Right ventricle myocardium inferior (tissue), 1 donor: ENCODE measurements at regions of chr14 and their contacts with region 1.

Region 1: GRCh38 chr14:66359500-66359899 is 126.7 kb upstream of the CCDC196 start:
- DNase-seq: no peak
- ATAC-seq: no peak

Region 2: GRCh38 chr14:66293533-66294105 is 65.9 kb before region 1 on chr14:
- intact Hi-C with region 1: no loop called
- DNase-seq: no peak
- ATAC-seq: no peak

Region 3: GRCh38 chr14:66315548-66315947 is 44.0 kb before region 1 on chr14:
- intact Hi-C with region 1: no loop called
- DNase-seq: no peak
- ATAC-seq: no peak

Region 4: GRCh38 chr14:67111022-67111421 is 751.5 kb after region 1 on chr14:
- intact Hi-C with region 1: loop called (anchors 10 kb)
- DNase-seq: no peak
- ATAC-seq: no peak